Activated CD8-positive, alpha-beta T cell treated with anti-CD3 and anti-CD28 coated beads, Interleukin-2, amount 10 ng/mL, durations not matched to agents 7 days and 5 days (primary cell): ENCODE measurements at regions of chr14 and their contacts with region 1.

Region 1: DNA sequence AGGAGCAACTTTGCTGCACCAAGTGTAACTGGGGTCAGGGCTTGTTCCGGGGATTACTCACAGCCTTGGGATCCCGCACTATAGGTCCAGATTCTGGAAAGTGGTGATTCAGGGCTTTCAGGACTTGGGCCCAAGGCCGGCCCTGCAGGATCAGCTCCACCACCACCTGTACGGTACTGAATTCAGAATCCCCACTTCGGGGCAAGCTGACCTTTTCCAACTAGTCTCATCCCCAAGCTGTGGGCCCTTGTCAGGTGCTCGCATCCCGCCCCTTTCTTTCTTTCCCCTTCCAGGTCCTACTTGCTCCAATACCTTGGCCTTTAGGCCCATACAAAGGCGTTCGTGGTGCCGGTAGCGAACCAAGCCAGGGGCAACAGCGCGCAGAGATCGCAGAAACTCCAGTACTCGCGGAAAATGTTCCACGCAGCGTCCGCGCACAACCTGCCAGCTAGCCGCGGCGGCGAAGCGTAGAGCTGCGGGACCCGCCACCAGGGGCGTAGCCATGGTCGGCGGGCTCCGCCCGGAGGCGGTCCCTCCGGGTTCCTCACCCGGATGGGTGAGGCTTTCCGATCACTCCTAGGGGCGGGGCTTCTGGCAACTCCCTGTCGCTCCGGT is 487 bp downstream of the TINF2 start:
- DNase-seq: peak; percentile 95
- ATAC-seq: peak; percentile 85
- H3K4me3 Mint-ChIP-seq: peak overlapping the region; percentile 94
- H3K27ac Mint-ChIP-seq: peak overlapping the region; percentile 100
- H3K4me1 Mint-ChIP-seq: peaks cover 54% of the 10 kb centered on the region
- H3K27me3 Mint-ChIP-seq: no peaks in the 10 kb centered on the region

Region 2: DNA sequence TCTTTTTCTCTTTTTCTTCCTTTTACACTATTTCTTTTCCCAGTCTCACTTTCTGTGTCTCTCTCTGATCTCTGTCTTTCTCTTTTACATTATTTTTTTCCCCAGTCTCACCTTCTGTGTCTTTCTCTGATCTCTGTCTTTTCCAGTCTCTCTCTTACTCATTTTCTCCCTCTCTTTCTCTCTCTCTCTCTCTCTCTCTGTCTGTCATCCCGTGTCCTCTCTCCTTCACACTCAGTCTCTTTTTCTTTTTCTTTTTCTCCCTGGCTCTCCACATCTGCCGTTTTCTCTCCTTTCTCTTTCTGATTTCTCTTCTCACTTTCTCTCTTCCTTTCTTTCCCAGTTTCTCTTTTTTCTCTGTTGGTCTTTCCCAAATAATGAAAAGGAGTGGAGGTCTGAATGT is 230.9 kb before region 1 on chr14:
- CTCF ChIA-PET with region 1: no interaction called
- POLR2A ChIA-PET with region 1: no interaction called
- DNase-seq: no peak
- ATAC-seq: no peak
- H3K4me3 Mint-ChIP-seq: no peak overlapping the region
- H3K27ac Mint-ChIP-seq: no peak overlapping the region
- H3K4me1 Mint-ChIP-seq: peaks cover 36% of the 10 kb centered on the region
- H3K27me3 Mint-ChIP-seq: no peaks in the 10 kb centered on the region

Region 3: DNA sequence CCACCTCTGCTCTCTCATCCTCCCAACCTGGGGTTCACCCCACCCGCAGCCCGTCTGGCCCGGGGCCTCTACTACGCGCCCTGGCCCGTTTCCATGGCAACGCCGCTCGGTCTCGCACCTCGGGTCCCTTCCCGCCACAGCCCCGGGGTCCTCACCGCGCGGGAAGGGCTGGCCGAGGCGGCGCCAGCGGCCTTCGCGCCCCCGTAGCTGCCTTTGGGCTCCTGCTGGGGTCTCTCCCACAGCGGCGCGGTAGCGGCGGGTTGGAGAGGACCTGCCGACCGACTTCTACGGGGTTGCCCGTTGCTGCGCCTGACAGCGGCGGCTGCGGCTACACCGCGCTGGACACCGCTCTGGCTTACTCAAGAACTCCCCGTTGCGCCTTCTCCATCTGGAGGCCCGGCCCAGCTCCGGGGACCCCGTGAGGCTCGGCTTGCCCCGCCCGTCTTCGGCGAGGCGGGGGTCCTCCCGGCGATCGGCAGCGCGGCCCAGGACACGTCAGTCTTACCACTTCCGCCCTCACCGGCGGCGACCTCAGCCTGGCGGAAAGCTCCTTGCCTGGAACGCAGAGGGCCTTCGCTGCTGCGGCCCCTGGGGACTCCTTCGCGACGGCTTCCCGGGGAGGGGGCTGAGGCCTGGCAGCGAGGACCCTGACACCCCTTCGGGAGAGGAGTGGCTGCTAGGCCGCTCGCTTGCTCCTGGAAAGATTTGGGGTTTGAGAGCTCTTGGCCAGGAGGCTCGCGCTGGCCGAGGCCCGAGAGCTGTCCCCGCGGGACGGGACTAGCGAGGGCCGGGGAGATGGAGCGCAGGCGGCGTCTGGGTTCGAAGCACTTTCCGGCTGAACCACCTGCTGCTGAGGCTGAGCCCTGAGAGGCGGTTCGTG is 46.5 kb before region 1 on chr14 and contains the start of gene TM9SF1:
- CTCF ChIA-PET with region 1: interaction called, 24 read pairs
- POLR2A ChIA-PET with region 1: interaction called, 22 read pairs
- DNase-seq: peak; percentile 92
- ATAC-seq: peak; percentile 88
- H3K4me3 Mint-ChIP-seq: peak within 1 kb of the TSS; percentile 88
- H3K27ac Mint-ChIP-seq: peak within 1 kb of the TSS; percentile 96
- H3K4me1 Mint-ChIP-seq: peaks cover 56% of the 10 kb centered on the region
- H3K27me3 Mint-ChIP-seq: no peaks in the 10 kb centered on the region
- total RNA-seq, gene TM9SF1: 29.3 to 32.8 TPM

Region 4: DNA sequence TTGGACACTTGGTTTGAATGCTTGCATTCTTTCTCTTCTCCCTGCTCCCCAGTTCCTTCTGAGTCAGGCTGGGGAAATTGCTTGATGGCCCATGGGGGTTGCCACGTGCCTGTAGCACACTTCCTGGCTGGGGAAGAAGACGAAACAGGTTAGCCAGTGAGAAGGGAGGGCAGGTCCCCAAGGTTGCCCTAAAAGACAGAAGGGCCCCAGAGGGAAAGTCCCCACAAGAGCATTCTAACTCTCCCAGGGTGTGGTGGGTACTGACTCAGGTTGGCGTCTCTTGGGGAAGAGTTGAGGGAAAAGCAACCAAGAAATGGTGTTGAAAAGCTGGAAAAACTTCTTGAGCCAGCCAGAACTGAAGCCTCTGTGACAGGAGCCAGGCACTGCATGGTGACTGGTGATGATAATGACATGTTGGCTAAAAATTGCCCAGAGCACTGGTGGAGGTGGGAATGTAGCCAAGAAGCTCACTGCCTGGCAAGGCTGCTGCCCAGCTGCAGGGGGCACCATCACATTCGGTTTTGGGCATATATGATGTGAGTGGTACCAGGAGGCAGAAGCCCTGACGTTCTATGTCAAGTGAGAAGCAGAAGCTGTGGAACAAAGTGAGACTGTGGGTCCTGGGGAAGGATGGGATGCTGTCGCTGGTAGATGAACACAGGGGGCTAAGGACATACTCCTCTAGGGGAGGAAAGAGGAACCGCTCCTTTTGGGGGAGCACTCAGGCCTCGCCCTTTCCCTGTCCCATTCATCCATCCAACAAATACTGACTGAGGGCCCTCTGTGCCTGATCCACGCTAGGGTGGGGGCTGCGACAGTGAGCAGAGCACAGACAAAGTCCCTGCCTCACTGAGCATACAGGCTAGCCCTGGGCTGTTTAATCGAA is 37.6 kb after region 1 on chr14:
- CTCF ChIA-PET with region 1: interaction called, 98 read pairs
- POLR2A ChIA-PET with region 1: interaction called, 19 read pairs
- DNase-seq: peak; percentile 44
- ATAC-seq: peak; percentile 69
- H3K4me3 Mint-ChIP-seq: no peak overlapping the region
- H3K27ac Mint-ChIP-seq: peak overlapping the region; percentile 73
- H3K4me1 Mint-ChIP-seq: peaks cover 30% of the 10 kb centered on the region
- H3K27me3 Mint-ChIP-seq: no peaks in the 10 kb centered on the region

Region 5: GRCh38 chr14:24299255-24300195 is 57.6 kb after region 1 on chr14 and contains the starts of genes DHRS1 and NOP9:
- CTCF ChIA-PET with region 1: interaction called, 801 read pairs
- POLR2A ChIA-PET with region 1: interaction called, 73 read pairs
- DNase-seq: peak; percentile 94
- ATAC-seq: peak; percentile 83
- H3K4me3 Mint-ChIP-seq: peak within 1 kb of the TSS; percentile 91
- H3K27ac Mint-ChIP-seq: peak within 1 kb of the TSS; percentile 91
- H3K4me1 Mint-ChIP-seq: peaks cover 53% of the 10 kb centered on the region
- H3K27me3 Mint-ChIP-seq: no peaks in the 10 kb centered on the region
- total RNA-seq, gene DHRS1: 28.6 to 33.9 TPM
- total RNA-seq, gene NOP9: 35.2 to 36.7 TPM